ENCODE measurements at regions of chr1 and their contacts with region 1.

Region 1: GRCh38 chr1:15684468-15685291 is 560 bp downstream of the PLEKHM2 start:
- DNase-seq: peak; percentile 50
- H3K4me3 Mint-ChIP-seq: peak overlapping the region; percentile 86
- H3K27ac Mint-ChIP-seq: peak overlapping the region; percentile 87
- H3K4me1 Mint-ChIP-seq: peaks cover 39% of the 10 kb centered on the region
- H3K27me3 Mint-ChIP-seq: no peaks in the 10 kb centered on the region

Region 2: DNA sequence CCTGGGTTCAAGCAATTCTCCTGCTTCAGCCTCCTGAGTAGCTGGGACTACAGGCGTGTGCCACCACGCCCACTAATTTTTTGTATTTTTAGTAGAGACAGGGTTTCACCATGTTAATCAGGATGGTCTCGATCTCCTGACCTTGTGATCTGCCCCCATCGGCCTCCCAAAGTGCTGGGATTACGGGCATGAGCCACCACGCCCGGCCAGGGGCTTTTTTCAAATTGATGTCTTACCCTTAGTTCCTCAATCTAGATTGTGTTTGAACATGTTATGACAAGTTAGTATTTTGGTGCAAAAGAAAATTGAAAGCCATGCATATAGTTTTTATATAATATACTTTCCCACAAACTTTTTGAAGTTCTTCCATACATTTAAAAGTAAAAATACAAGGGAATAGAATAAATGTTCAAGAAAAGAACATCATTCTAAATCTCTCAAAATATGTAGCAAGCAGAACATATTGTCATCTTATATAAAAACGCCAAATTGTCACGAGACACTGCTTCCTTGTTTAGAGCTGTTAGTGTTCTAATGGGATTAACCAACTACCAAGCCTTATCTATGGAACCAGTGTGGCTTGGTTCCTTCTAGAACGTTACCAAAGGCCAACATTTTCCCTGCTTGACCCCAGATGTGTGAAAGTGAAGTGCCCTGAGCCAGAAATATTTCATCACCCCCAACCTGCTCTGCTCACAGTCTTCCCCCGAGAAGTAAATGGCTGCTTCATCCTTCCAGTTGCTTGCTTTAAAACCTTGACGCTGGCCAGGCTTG is 10.1 kb before region 1 on chr1:
- CTCF ChIA-PET with region 1: no interaction called
- POLR2A ChIA-PET with region 1: no interaction called
- intact Hi-C with region 1: no loop called
- DNase-seq: no peak
- H3K4me3 Mint-ChIP-seq: no peak overlapping the region
- H3K27ac Mint-ChIP-seq: no peak overlapping the region
- H3K4me1 Mint-ChIP-seq: peaks cover 4% of the 10 kb centered on the region
- H3K27me3 Mint-ChIP-seq: no peaks in the 10 kb centered on the region

Region 3: GRCh38 chr1:15696956-15697521 is 12.4 kb after region 1 on chr1:
- CTCF ChIA-PET with region 1: interaction called, 4 read pairs
- POLR2A ChIA-PET with region 1: interaction called, 7 read pairs
- intact Hi-C with region 1: loop called (anchors 1 kb)
- DNase-seq: peak; percentile 65
- H3K4me3 Mint-ChIP-seq: peak overlapping the region; percentile 64
- H3K27ac Mint-ChIP-seq: peak overlapping the region; percentile 91
- H3K4me1 Mint-ChIP-seq: peaks cover 24% of the 10 kb centered on the region
- H3K27me3 Mint-ChIP-seq: no peaks in the 10 kb centered on the region